Left cardiac atrium (tissue), 4 donors: ENCODE measurements at regions of chr3 and their contacts with region 1.

Region 1: DNA sequence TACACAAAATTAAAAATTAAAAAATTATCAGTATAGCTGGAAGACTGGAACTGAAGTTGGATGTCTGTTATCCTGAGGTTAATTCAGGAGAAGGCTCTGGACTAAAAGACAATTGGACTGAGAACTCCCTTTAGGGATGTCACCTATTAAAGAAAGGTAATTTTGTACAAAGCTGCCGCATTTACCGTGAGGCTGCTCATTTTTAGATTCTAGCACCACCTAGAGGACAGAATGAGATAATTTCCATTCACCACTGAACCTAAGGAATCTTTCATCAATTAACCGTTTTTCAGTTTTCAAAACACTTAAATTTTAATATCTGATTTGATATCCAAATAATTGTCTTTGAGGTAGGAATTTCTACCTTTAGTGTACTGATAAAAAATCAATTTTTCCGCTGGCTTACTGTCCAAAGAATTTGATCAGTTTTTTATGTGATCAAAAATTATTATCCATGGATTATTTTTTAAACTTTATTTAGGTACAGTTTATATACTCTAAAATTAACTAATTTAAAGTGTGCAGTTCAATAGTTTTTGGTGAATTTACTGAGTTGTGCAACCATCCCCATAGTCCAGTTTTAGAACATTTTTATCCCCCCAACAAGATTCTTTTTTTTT is 106.7 kb upstream of the TNIK start:
- DNase-seq: no peak
- ATAC-seq: no peak

Region 2: DNA sequence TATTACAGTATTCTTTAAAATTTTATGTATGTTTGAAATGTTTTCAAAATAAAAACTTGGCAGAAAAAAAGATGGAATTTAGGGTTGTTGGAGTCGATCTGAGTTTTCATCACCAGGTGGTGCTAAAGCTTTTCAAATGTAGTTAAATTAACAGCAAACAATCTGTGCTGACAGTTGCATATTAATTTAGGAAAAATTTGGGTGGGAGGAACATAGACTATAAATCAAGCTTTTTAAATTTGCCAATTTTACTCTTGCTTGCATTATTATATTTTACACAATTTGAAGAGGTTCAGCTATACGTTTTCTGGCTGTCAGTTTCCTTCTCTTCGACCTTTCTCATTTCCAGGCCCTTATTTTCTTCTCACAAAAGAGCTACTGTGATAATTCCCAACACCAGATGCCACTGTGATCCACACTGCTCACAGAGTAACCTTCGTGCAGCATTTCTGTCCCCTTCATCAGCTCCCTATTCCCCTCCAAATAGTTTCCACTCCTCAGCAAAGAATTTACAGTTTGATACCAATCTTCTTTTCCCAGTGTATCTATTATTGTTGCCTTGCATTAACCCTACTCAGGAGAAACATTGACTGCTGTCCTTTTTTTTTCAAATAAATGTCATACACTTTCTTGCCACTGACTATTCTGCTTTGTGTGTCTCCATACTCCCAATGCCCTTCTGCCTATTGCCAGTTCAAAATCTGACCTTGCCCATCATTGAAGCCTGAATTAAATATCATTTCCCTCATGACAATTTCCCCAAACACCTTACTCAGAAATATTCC is 605.1 kb before region 1 on chr3:
- intact Hi-C with region 1: loop called (anchors 2 to 10 kb)
- DNase-seq: no peak
- ATAC-seq: peak in 1 of 2 donors; percentile 38

Region 3: GRCh38 chr3:171049861-171050444 is 517.0 kb before region 1 on chr3:
- intact Hi-C with region 1: loop called in 1 of 2 experiments (anchors 2 kb)
- DNase-seq: peak; percentile 51
- ATAC-seq: peak; percentile 72 to 76

Region 4: DNA sequence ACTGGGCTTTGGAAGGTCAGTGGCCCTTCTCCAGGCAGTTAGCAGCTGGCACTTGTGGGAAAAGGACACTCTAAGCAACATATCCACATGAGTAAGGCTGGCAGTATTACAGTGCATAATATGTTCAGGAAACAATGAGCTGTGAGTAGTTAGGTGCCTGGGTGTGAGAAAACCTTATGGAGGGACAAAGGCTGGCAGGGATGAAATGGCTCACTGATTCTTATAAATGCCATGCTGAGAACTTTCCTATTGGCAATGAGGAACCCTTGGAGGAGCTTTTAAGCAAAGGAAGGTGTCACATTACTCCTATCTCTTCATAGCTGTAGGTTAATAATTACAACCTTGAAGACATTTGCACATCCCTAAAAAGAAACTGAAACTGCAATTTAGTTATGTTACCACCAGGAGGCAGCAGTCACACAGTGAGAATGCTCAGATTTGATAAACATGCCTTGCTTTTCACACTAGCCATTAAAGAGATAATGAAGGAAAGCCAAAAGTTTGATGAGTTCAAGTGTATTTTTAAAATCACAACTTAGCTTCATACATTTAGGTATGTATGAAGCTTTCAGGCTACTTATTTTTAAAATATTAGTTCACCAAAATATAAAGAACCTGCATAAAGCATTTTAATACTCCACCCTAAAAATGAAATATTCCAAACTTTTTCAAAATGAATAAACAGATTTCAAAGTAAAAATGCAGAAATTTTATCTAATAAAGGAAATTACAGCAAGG is 403.8 kb before region 1 on chr3:
- intact Hi-C with region 1: loop called in 1 of 2 experiments (anchors 10 kb)
- DNase-seq: no peak
- ATAC-seq: no peak